Endothelial cell of umbilical vein (primary cell): ENCODE measurements at regions of chr3 and their contacts with region 1.

Region 1: DNA sequence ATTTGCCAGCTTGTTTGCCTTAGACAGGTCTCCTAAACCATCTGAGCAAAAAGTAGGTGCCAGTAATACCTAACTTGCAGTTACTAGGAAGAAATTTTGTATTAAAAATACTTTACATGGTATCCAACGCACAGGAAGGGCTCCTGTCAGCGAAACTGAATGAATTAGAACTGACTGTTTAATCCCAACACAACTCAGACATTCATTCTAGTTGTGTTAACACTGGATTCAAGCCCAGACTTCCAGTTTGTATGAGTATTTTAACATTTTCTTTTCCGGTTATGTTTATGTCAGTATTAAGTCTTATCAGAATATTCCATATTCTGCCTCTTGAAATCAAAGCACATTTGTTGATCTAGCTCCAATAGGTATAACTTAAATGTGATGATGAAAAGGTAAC is 82.0 kb upstream of the SOX2 start:
- DNase-seq: peak; percentile 79
- H3K4me3 ChIP-seq: no peak overlapping the region
- H3K27ac ChIP-seq: peak overlapping the region; percentile 96
- H3K4me1 ChIP-seq: peaks cover 53% of the 10 kb centered on the region
- H3K27me3 ChIP-seq: no peaks in the 10 kb centered on the region
- CTCF ChIP-seq: no peak
- POLR2A ChIP-seq: no peak

Region 2: DNA sequence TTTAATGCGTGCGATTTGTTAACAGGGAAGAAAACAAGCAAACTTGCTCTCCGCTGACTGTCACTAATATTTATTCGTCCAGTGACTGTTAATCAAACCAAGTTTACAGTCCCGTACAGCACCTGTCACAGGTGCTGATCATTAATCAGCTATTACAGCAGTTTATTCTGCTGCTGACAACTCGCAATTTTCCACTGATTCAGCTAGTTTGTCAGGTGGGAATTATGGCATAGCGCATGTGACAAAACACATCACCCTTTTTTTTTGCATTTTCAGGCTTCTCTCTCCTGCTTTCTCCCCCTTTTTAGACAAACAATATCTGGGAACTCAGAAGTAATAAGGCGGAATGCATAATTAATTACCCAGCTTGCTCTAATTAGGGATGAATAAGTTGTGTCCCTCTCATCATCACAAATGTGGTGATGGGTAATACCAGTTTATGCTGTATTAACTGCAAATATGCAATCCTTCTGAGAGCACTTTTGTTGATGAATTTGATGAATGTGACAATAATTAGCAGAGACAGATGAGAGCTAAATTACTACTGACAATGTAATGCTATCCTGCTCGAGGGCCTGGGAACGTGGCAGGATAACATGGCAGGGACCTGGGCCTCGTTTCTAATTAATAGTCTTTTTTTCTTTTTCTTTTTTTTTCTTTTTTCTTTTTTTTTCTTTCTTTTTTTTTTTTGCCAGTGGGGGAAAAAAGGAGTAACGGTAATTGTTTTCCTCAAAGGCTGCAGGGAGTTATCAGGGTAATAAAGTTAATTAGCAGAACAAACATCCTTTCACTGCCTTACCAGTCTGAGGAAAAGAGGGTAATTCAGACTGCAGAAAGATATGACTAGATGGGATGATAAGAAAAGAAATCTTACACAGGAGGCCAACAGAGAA is 68.3 kb before region 1 on chr3:
- CTCF ChIA-PET with region 1: interaction called, 41 read pairs
- POLR2A ChIA-PET with region 1: no interaction called
- dilution Hi-C with region 1: no loop called
- intact Hi-C with region 1: loop called (anchors 2 kb)
- DNase-seq: no peak
- H3K4me3 ChIP-seq: no peak overlapping the region
- H3K27ac ChIP-seq: no peak overlapping the region
- H3K4me1 ChIP-seq: no peaks in the 10 kb centered on the region
- H3K27me3 ChIP-seq: no peaks in the 10 kb centered on the region
- CTCF ChIP-seq: no peak
- POLR2A ChIP-seq: no peak

Region 3: GRCh38 chr3:181683563-181683962 is 53.9 kb after region 1 on chr3:
- CTCF ChIA-PET with region 1: no interaction called
- POLR2A ChIA-PET with region 1: no interaction called
- dilution Hi-C with region 1: no loop called
- intact Hi-C with region 1: no loop called
- DNase-seq: no peak
- H3K4me3 ChIP-seq: no peak overlapping the region
- H3K27ac ChIP-seq: no peak overlapping the region
- H3K4me1 ChIP-seq: no peaks in the 10 kb centered on the region
- H3K27me3 ChIP-seq: no peaks in the 10 kb centered on the region
- CTCF ChIP-seq: no peak
- POLR2A ChIP-seq: no peak

Region 4: GRCh38 chr3:181694805-181695660 is 65.3 kb after region 1 on chr3:
- CTCF ChIA-PET with region 1: interaction called, 80 read pairs
- POLR2A ChIA-PET with region 1: interaction called, 3 read pairs
- dilution Hi-C with region 1: no loop called
- intact Hi-C with region 1: loop called (anchors 1 kb)
- DNase-seq: peak; percentile 66
- H3K4me3 ChIP-seq: peak overlapping the region; percentile 26 to 57 (median 37)
- H3K27ac ChIP-seq: peak overlapping the region; percentile 44
- H3K4me1 ChIP-seq: peaks cover 21% of the 10 kb centered on the region
- H3K27me3 ChIP-seq: no peaks in the 10 kb centered on the region
- CTCF ChIP-seq: peak; percentile 47 to 50
- POLR2A ChIP-seq: peak; percentile 32